Naive thymus-derived CD4-positive, alpha-beta T cell (primary cell): ENCODE measurements at regions of chr15 and their contacts with region 1.

Region 1: GRCh38 chr15:65869127-65869953 is at the start of gene RAB11A:
- DNase-seq: peak; percentile 91 to 97 (median 95)
- ATAC-seq: peak; percentile 96
- H3K4me3 ChIP-seq: peak within 1 kb of the TSS; percentile 94
- H3K4me3 Mint-ChIP-seq: peak within 1 kb of the TSS; percentile 88 to 100 (median 100)
- H3K27ac ChIP-seq: peak within 1 kb of the TSS; percentile 94
- H3K27ac Mint-ChIP-seq: peak within 1 kb of the TSS; percentile 97 to 100 (median 99)
- H3K4me1 ChIP-seq: peaks cover 5 to 24% of the 10 kb centered on the region in 2 donors
- H3K4me1 Mint-ChIP-seq: peaks cover 23 to 37% (median 32%) of the 10 kb centered on the region in 7 donors
- H3K27me3 ChIP-seq: no peaks in the 10 kb centered on the region
- H3K27me3 Mint-ChIP-seq: peaks cover 0 to 5% (median 0%) of the 10 kb centered on the region in 5 donors
- total RNA-seq, gene RAB11A: 80.9 to 201 (median 88.7) TPM

Region 2: GRCh38 chr15:65304389-65305144 is 564.8 kb before region 1 on chr15 and contains the start of gene RNU5B-1:
- CTCF ChIA-PET with region 1: no interaction called
- POLR2A ChIA-PET with region 1: interaction called, 11 read pairs
- intact Hi-C with region 1: loop called in 1 of 2 experiments (anchors 5 kb)
- DNase-seq: peak; percentile 40 to 94 (median 88)
- ATAC-seq: peak; percentile 89
- H3K4me3 ChIP-seq: peak within 1 kb of the TSS; percentile 60
- H3K4me3 Mint-ChIP-seq: peak within 1 kb of the TSS; percentile 91 to 99 (median 97)
- H3K27ac ChIP-seq: peak within 1 kb of the TSS; percentile 83
- H3K27ac Mint-ChIP-seq: peak within 1 kb of the TSS; percentile 96 to 100 (median 99)
- H3K4me1 ChIP-seq: peaks cover 0 to 9% of the 10 kb centered on the region in 2 donors
- H3K4me1 Mint-ChIP-seq: peaks cover 4 to 35% (median 31%) of the 10 kb centered on the region in 7 donors
- H3K27me3 ChIP-seq: no peaks in the 10 kb centered on the region
- H3K27me3 Mint-ChIP-seq: peaks cover 0 to 11% (median 0%) of the 10 kb centered on the region in 5 donors
- total RNA-seq, gene RNU5B-1: 18.9 TPM in 1 of 5 experiments, not detected in the others

Region 3: DNA sequence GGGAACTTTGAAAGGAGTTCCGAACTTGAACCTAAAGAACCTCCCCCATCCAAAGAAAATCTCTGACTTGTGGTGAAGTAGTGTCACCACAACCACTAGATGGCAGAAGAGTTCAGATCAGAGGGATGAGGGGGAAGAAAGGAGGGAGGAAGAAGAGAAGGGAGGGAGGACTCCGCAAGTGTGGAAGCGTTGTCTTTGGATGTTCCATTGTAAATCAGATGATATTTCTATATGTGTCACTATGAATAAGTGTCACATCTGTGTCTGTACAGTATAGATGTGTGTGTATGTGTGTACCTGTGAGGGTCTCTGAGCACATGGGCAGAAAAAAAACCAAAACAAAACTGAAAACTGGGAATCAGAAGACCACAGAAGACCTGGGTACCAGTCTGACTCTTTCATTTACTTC is 230.7 kb before region 1 on chr15:
- CTCF ChIA-PET with region 1: interaction called, 15 read pairs
- POLR2A ChIA-PET with region 1: interaction called, 4 read pairs
- intact Hi-C with region 1: no loop called
- DNase-seq: peak in 8 of 9 donors; percentile 34 to 75 (median 68)
- ATAC-seq: peak; percentile 92
- H3K4me3 ChIP-seq: no peak overlapping the region
- H3K4me3 Mint-ChIP-seq: peak overlapping the region in 5 of 10 donors; percentile 0 to 60 (median 4)
- H3K27ac ChIP-seq: no peak overlapping the region
- H3K27ac Mint-ChIP-seq: peak overlapping the region in 3 of 9 donors; percentile 6 to 15 (median 11)
- H3K4me1 ChIP-seq: no peaks in the 10 kb centered on the region
- H3K4me1 Mint-ChIP-seq: peaks cover 7 to 19% (median 10%) of the 10 kb centered on the region in 7 donors
- H3K27me3 ChIP-seq: no peaks in the 10 kb centered on the region
- H3K27me3 Mint-ChIP-seq: no peaks in the 10 kb centered on the region

Region 4: DNA sequence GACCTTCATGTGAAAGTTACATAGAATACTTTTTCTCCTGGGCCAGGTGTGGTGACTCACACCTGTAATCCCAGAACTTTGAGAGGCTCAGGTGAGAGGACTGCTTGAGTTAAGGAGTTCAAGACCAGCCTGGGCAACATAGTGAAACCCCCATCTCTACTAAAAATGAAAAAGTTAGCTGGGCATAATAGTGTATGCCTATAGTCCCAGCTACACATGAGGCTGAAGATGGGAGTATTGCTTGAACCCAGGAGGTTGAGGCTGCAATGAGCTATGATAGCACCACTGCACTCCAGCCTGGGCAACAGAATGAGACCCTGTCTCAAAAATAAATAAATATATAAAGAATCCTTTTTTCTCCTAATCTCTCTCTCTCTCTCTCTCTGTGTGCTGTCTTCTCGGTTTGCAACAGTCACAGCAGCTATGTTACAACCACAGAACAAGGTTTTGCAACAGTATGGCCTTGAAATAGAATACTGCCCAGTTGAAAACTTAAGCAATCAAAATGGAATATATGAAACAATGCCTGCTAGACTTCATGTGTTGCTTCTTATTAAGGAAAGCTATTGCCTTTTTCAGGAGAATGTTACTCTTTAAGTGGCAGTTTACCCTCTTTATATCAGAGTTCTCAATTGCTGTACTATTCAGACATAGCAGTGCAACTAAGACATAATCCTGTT is 64.9 kb before region 1 on chr15:
- CTCF ChIA-PET with region 1: no interaction called
- POLR2A ChIA-PET with region 1: no interaction called
- intact Hi-C with region 1: no loop called
- DNase-seq: no peak
- ATAC-seq: peak; percentile 67
- H3K4me3 ChIP-seq: no peak overlapping the region
- H3K4me3 Mint-ChIP-seq: no peak overlapping the region
- H3K27ac ChIP-seq: no peak overlapping the region
- H3K27ac Mint-ChIP-seq: peak overlapping the region in 6 of 9 donors; percentile 1 to 98 (median 80)
- H3K4me1 ChIP-seq: peaks cover 20 to 27% of the 10 kb centered on the region in 2 donors
- H3K4me1 Mint-ChIP-seq: peaks cover 4 to 42% (median 35%) of the 10 kb centered on the region in 7 donors
- H3K27me3 ChIP-seq: no peaks in the 10 kb centered on the region
- H3K27me3 Mint-ChIP-seq: no peaks in the 10 kb centered on the region

Region 5: DNA sequence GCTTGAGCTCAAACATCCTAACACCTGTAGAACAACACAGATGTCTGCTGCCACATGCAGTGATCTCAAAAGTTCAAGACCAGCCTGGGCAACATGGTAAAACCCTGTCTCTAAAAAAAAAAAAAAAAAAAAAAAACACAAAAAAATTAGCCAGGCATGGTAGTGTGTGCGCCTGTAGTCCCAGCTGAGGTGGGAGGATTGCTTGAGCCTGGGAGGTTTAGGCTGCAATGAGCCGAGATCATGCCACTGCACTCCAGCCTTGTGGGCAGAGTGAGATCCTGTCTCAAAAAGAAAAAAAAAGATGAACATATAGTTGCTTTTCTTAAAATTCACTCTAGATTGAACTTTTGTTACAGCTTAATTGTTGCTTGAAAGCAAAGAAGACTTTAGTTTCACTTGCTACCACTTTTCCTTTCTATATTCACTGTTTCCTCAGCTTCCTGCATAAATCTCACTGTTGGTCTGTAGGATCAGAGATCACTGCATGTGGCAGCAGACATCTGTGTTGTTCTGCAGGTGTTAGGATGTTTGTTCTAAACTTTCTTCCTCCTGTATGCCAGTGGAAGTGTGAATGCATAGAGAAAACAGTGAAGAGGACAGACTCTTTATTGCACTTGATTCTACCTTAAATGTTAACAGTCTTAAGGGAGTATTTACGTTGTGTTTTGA is 12.6 kb after region 1 on chr15:
- CTCF ChIA-PET with region 1: interaction called, 5 read pairs
- POLR2A ChIA-PET with region 1: interaction called, 40 read pairs
- intact Hi-C with region 1: loop called (anchors 1 kb)
- DNase-seq: peak in 6 of 9 donors; percentile 17 to 48 (median 33)
- ATAC-seq: peak; percentile 43
- H3K4me3 ChIP-seq: no peak overlapping the region
- H3K4me3 Mint-ChIP-seq: peak overlapping the region; percentile 37 to 82 (median 62)
- H3K27ac ChIP-seq: peak overlapping the region; percentile 57
- H3K27ac Mint-ChIP-seq: peak overlapping the region; percentile 51 to 99 (median 90)
- H3K4me1 ChIP-seq: peaks cover 7 to 46% of the 10 kb centered on the region in 2 donors
- H3K4me1 Mint-ChIP-seq: peaks cover 24 to 82% (median 67%) of the 10 kb centered on the region in 7 donors
- H3K27me3 ChIP-seq: no peaks in the 10 kb centered on the region
- H3K27me3 Mint-ChIP-seq: no peaks in the 10 kb centered on the region

Region 6: DNA sequence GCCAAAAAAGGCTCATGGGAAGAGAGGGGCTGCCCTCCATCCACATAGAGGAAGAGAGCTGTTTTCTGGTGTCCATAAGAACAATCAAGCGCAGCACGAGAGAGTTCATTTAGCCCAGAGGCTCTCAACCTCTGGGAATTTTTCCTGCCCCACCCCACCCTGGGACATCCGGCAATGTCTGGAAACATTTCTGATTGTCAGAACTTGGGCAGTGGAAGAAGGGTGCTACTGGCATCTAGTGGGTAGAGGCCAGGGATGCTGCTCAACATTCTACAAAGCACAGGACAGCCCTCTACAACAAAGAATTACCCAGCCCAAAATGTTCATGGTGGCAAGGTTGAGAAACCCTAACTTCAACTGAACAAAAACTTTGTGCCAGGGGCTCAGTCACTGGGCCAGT is 92.8 kb after region 1 on chr15:
- CTCF ChIA-PET with region 1: no interaction called
- POLR2A ChIA-PET with region 1: no interaction called
- intact Hi-C with region 1: loop called in 1 of 2 experiments (anchors 10 kb)
- DNase-seq: no peak
- ATAC-seq: no peak
- H3K4me3 ChIP-seq: no peak overlapping the region
- H3K4me3 Mint-ChIP-seq: no peak overlapping the region
- H3K27ac ChIP-seq: no peak overlapping the region
- H3K27ac Mint-ChIP-seq: no peak overlapping the region
- H3K4me1 ChIP-seq: no peaks in the 10 kb centered on the region
- H3K4me1 Mint-ChIP-seq: peaks cover 0 to 10% (median 1%) of the 10 kb centered on the region in 7 donors
- H3K27me3 ChIP-seq: no peaks in the 10 kb centered on the region
- H3K27me3 Mint-ChIP-seq: peaks cover 10 to 53% (median 15%) of the 10 kb centered on the region in 5 donors

Region 7: GRCh38 chr15:66386204-66387123 is 517.1 kb after region 1 on chr15 and contains the start of gene MAP2K1:
- CTCF ChIA-PET with region 1: no interaction called
- POLR2A ChIA-PET with region 1: no interaction called
- intact Hi-C with region 1: loop called in 1 of 2 experiments (anchors 1 kb)
- DNase-seq: peak; percentile 97 to 98 (median 98)
- ATAC-seq: peak; percentile 97
- H3K4me3 ChIP-seq: peak within 1 kb of the TSS; percentile 81
- H3K4me3 Mint-ChIP-seq: peak within 1 kb of the TSS; percentile 87 to 100 (median 98)
- H3K27ac ChIP-seq: peak within 1 kb of the TSS; percentile 85
- H3K27ac Mint-ChIP-seq: peak within 1 kb of the TSS; percentile 91 to 100 (median 99)
- H3K4me1 ChIP-seq: peaks cover 33 to 39% of the 10 kb centered on the region in 2 donors
- H3K4me1 Mint-ChIP-seq: peaks cover 42 to 61% (median 53%) of the 10 kb centered on the region in 7 donors
- H3K27me3 ChIP-seq: no peaks in the 10 kb centered on the region
- H3K27me3 Mint-ChIP-seq: no peaks in the 10 kb centered on the region
- total RNA-seq, gene MAP2K1: 37.7 to 97.2 (median 47.5) TPM